ENCODE measurements at regions of chr15 and their contacts with region 1.

Region 1: GRCh38 chr15:98647774-98648653 is at the start of gene IGF1R:
- DNase-seq: peak; percentile 91 to 95
- ATAC-seq: peak; percentile 91
- H3K4me3 ChIP-seq: peak within 1 kb of the TSS; percentile 99
- H3K27ac ChIP-seq: peak within 1 kb of the TSS; percentile 69 to 94
- H3K4me1 ChIP-seq: no peaks in the 10 kb centered on the region
- H3K27me3 ChIP-seq: no peaks in the 10 kb centered on the region
- total RNA-seq, gene IGF1R: 88.8 to 137 TPM

Region 2: DNA sequence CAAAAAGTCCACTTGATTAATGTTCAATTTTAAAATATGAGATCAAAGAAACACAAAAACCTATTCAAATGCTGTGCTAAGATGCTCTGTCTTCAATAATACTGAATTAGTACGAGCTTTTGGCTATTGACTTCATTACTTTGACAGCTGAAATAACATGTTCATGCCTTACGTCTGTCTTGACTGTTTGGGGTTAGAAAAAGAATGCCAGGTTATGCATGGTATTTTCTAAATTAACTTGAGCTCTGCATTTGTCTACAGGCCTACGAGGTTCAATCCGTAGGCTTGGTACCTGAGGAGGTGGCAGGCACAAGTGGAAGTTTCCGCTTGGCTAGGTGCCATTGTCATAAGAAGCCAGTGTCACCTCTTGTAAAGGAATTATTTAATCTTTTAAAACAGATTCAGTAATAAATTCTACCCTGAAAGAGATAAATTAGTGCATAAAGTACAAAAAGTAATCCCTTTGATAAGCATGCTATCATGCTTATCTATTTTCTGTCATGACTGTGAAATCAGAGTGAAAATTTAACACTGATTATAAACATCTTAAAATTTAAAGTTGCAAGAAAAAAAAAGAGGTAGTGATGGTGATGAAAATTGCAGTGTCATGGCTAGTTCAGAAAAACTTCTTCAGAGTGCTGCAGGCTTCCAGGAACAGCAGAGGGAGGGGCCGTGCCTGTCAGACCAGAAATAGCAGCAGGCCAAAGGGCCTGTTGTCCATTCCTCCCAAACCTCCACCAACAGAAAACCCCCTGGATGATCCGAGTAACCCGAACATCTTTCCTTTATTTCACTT is 571.8 kb before region 1 on chr15:
- intact Hi-C with region 1: no loop called
- DNase-seq: peak in 1 of 2 donors; percentile 76
- ATAC-seq: peak; percentile 84
- H3K4me3 ChIP-seq: no peak overlapping the region
- H3K27ac ChIP-seq: no peak overlapping the region
- H3K4me1 ChIP-seq: no peaks in the 10 kb centered on the region
- H3K27me3 ChIP-seq: no peaks in the 10 kb centered on the region

Region 3: DNA sequence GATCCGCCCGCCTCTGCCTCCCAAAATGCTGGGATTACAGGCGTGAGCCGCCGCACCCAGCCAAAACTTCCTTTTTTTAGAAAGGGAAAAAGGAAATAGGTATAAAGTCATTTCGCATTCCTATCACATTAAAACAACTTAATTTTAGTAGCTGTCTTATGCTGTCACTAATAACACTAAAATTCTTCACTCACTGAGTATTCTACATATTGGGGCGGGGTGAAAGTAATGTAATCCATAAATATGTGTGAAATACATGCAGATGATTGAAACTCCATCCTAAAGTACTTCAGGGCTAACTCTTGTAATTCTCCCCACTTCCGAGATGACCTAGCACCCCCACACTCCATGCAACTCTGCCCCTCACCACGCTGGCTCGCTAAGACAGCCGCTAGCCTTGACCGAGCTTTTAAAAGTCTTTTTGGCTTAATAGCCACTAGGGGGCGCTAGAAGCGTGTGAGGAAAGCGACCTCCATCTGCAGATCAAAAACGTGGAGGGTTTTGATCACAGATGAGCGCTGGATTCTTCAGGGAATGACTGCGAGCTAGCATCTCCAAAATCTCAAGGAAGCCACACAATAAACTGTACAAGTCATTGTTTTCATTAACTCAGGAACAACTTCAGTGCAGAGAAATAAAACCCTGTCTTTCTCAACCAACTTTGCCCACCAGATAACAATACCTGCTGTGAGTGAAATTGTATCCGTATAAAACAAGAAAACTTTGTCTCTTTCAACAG is 129.0 kb before region 1 on chr15:
- intact Hi-C with region 1: loop called (anchors 2 to 5 kb)
- DNase-seq: peak; percentile 61 to 75
- ATAC-seq: peak; percentile 90
- H3K4me3 ChIP-seq: no peak overlapping the region
- H3K27ac ChIP-seq: no peak overlapping the region
- H3K4me1 ChIP-seq: no peaks in the 10 kb centered on the region
- H3K27me3 ChIP-seq: no peaks in the 10 kb centered on the region

Region 4: DNA sequence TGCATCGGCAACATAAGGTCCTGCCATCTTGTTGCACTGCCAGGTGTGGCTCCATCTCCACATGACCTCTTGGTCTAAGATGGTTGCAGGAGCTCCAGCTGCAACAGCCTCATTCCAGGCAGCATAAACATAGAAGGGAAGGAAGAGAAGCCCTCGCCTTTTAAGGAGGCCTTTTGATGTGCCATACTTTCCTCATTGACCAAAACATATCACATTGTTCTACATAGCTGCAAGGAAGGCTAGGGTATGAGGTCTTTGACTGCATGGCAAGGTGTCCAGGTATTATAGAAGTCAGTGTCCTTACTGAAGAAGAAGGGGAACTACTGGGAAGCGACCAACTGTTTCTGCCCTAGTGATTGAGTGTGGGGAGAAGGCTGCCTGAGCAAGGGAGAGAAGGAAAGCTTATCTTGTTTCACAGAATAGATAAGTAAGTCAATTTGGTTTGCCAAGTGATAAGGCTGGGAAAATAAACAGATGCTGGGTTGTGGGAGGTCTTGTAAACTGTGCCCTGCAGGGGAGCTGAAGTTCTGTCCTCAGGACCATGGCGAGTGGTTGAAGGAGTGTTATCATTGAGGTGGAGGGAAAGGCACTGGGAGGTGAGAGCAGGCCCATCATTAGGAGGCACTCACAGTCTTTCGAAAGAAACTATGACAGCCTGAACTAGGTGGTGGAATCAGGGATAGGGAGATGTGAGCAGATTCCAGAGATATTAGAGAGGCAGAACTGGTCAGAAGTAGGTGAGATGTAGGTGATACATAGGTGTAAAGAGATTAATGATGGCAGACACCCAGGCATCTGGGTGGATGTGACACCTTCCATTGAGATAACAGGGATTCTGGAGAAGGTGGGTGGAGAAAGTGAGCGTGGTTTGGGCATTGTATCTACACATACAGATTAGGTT is 93.5 kb before region 1 on chr15:
- intact Hi-C with region 1: no loop called
- DNase-seq: no peak
- ATAC-seq: no peak
- H3K4me3 ChIP-seq: no peak overlapping the region
- H3K27ac ChIP-seq: no peak overlapping the region
- H3K4me1 ChIP-seq: no peaks in the 10 kb centered on the region
- H3K27me3 ChIP-seq: no peaks in the 10 kb centered on the region

Region 5: DNA sequence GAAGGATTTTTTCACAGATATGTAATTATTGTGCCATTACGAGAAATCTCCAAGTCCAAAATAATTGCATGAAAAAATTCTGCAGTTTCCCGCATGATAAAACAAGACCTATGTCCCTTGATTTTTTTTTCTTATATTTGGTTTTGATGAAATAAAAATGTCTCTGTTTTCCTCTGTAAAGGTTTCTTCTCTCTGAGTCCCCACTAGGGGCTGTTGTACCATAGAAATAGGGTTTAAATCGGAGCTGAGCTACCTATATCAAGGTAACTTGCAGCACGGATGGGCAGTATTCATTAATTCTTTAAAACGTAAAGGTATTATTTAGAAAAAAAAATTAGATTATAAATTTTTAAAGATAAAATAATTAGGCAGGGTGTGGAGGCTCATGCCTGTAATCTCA is 66.3 kb before region 1 on chr15:
- intact Hi-C with region 1: loop called in 1 of 2 experiments (anchors 10 kb)
- DNase-seq: no peak
- ATAC-seq: no peak
- H3K4me3 ChIP-seq: no peak overlapping the region
- H3K27ac ChIP-seq: no peak overlapping the region
- H3K4me1 ChIP-seq: no peaks in the 10 kb centered on the region
- H3K27me3 ChIP-seq: peaks cover 0 to 1% of the 10 kb centered on the region in 2 donors

Region 6: GRCh38 chr15:98779463-98780071 is 131.6 kb after region 1 on chr15:
- intact Hi-C with region 1: loop called in 1 of 2 experiments (anchors 5 kb)
- DNase-seq: peak; percentile 84 to 94
- ATAC-seq: peak; percentile 90
- H3K4me3 ChIP-seq: no peak overlapping the region
- H3K27ac ChIP-seq: peak overlapping the region in 1 of 2 donors; percentile 17
- H3K4me1 ChIP-seq: peaks cover 0 to 5% of the 10 kb centered on the region in 2 donors
- H3K27me3 ChIP-seq: no peaks in the 10 kb centered on the region

Region 7: DNA sequence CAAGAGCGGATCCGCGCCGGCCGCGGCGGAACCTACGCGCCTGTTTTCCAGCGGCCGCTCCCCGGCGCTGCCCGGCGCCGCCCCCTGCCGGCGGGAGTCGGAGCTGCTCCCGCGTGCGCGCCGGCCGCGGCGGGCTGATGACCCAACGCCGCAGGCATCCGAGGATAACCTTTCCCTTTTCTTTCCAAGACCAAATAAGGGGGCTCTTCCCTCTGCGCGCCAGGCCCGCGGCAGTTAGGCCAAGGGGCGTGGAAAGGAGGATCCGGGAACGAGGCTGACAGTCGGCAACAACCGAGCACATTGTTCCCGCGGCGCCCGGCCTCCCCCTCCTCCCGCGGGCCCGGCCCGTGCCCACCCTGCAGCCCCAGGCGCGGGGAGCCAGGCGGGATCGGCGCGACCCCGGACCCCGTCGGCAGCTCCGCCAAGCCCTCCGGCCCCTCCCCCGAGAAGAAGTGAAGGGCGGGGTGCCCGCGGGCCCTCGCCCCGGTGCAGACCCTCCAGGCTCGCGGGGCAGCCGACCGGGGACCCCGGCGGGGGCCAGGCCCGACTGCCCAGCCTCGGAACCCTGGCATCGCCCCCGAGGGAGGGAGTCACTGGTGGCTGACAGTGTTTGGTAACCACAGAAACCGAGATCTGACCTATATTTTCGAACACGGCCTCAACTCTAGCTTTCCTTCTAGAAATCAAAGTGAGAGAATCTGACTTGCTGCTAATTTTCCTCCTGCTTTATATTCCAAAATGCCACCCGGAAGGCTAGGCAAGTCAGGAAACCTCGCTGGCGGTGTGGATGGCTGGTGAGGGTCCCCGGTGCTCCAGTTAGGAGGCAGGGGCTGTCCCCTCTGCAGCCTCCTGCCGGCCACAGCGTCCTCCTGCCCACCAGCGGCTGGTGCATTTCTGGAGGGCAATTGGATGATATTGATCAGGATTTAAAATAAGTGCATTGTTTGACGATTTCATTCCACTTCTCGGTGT is 411.3 kb after region 1 on chr15:
- intact Hi-C with region 1: loop called in 1 of 2 experiments (anchors 5 kb)
- DNase-seq: peak; percentile 89 to 95
- ATAC-seq: peak; percentile 94
- H3K4me3 ChIP-seq: peak overlapping the region; percentile 63 to 77
- H3K27ac ChIP-seq: peak overlapping the region; percentile 52 to 58
- H3K4me1 ChIP-seq: no peaks in the 10 kb centered on the region
- H3K27me3 ChIP-seq: no peaks in the 10 kb centered on the region

Region 8: GRCh38 chr15:99076552-99077308 is 428.7 kb after region 1 on chr15:
- intact Hi-C with region 1: loop called (anchors 5 kb)
- DNase-seq: peak in 1 of 2 donors; percentile 63
- ATAC-seq: peak; percentile 90
- H3K4me3 ChIP-seq: peak overlapping the region; percentile 70 to 93
- H3K27ac ChIP-seq: no peak overlapping the region
- H3K4me1 ChIP-seq: no peaks in the 10 kb centered on the region
- H3K27me3 ChIP-seq: no peaks in the 10 kb centered on the region

Measured in aorta (tissue), 5 donors.